ENCODE measurements at regions of chr19 and their contacts with region 1.

Region 1: GRCh38 chr19:44582581-44583265 is 30.6 kb upstream of the IGSF23 start:
- DNase-seq: peak in 2 of 3 donors; percentile 29 to 31
- H3K4me3 ChIP-seq: no peak overlapping the region
- H3K27ac ChIP-seq: no peak overlapping the region
- H3K4me1 ChIP-seq: no peaks in the 10 kb centered on the region
- H3K27me3 ChIP-seq: no peaks in the 10 kb centered on the region

Region 2: DNA sequence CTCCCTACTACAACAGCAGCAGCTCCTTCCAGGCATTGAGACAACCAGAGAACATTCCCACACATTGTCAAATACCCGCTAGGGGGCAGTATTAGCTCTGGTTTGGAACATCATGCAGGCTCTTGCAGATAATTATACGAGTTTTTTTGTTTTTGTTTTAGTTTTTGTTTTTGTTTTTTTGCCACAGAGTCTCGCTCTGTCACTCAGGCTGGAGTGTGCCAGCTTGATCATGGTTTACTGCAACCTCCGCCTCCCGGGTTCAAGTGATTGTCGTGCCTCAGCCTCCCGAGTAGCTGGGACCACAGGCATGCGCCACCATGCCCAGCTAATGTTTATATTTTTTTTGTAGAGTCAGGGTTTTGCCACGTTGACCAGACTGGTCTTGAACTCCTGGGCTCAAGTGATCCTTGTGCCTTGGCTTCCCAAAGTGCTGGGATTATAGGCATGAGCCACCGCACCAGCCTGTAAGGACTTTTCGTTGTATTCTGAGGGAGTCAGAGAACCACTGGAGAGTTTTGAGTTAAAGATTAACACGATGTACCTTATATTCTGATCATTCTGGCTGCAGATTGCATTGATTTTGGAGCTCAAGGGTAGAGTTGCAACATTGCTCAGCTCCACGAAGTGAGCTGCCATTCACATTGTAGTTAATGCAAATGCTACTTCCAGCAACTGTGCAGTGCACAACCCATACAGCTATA is 11.6 kb before region 1 on chr19:
- CTCF ChIA-PET with region 1: interaction called, 16 read pairs
- POLR2A ChIA-PET with region 1: no interaction called
- DNase-seq: peak; percentile 74 to 88 (median 81)
- H3K4me3 ChIP-seq: no peak overlapping the region
- H3K27ac ChIP-seq: no peak overlapping the region
- H3K4me1 ChIP-seq: no peaks in the 10 kb centered on the region
- H3K27me3 ChIP-seq: peaks cover 0 to 5% (median 0%) of the 10 kb centered on the region in 5 experiments

Measured in common myeloid progenitor, CD34-positive (primary cell).